PC-9 (cell line): ENCODE measurements at regions of chr11 and their contacts with region 1.

Region 1: GRCh38 chr11:69825037-69825834 is 6.0 kb upstream of the FGF3 start:
- DNase-seq: peak; percentile 83 to 89
- H3K4me3 ChIP-seq: peak overlapping the region; percentile 13; the same call in 1 of the 2 replicates
- H3K27ac ChIP-seq: no peak overlapping the region
- H3K4me1 ChIP-seq: peaks cover 16% of the 10 kb centered on the region
- H3K27me3 ChIP-seq: no peaks in the 10 kb centered on the region
- CTCF ChIP-seq: no peak

Region 2: DNA sequence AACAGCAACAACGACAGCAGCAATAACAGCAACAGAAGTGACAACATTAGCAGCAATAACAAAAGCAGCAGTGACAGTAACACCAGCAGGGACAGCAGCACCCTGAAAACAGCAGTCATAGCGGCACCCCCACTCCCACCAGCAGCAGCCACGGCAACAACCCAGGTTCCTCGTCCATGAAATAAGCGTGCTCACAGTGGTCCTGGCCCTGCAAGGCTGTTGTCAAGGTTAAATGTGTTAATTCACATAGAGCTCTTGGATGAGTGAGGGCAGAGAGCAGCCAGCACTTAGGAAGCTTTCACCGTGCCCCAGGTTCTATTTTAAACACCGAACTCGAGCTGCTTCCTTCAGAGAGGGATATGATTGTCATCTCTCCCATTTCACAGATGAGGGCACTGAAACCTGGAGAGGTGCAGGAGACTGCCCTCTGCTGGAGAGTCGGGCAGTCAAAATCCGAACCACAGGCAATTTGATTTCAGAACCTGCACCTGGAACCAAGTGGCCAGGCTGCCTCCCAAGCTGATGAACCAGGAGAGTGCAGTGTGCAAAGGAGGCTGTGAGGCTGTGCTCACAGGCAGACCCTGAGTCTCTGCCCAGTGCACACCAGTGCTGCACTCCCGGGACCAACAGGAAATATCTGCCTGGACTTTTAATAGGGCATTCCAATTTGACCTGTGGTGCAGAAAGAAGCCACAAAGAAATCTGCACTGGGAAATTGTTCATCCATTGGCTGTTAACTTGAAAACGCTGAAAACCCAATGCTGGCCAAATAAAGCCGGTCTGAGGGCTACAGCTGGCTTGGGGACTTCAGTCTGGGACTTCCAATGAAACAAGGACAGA is 16.8 kb after region 1 on chr11:
- CTCF ChIA-PET with region 1: no interaction called
- POLR2A ChIA-PET with region 1: interaction called, 19 read pairs
- intact Hi-C with region 1: loop called (anchors 2 kb)
- DNase-seq: no peak
- H3K4me3 ChIP-seq: no peak overlapping the region
- H3K27ac ChIP-seq: no peak overlapping the region
- H3K4me1 ChIP-seq: peaks cover 10% of the 10 kb centered on the region
- H3K27me3 ChIP-seq: no peaks in the 10 kb centered on the region
- CTCF ChIP-seq: peak; percentile 66

Region 3: GRCh38 chr11:70029115-70029830 is 204.0 kb after region 1 on chr11:
- CTCF ChIA-PET with region 1: no interaction called
- POLR2A ChIA-PET with region 1: no interaction called
- intact Hi-C with region 1: no loop called
- DNase-seq: no peak
- H3K4me3 ChIP-seq: no peak overlapping the region
- H3K27ac ChIP-seq: no peak overlapping the region
- H3K4me1 ChIP-seq: peaks cover 3% of the 10 kb centered on the region
- H3K27me3 ChIP-seq: no peaks in the 10 kb centered on the region
- CTCF ChIP-seq: no peak

Region 4: GRCh38 chr11:70415184-70415583 is 589.9 kb after region 1 on chr11:
- CTCF ChIA-PET with region 1: no interaction called
- POLR2A ChIA-PET with region 1: no interaction called
- intact Hi-C with region 1: no loop called
- DNase-seq: no peak
- H3K4me3 ChIP-seq: no peak overlapping the region
- H3K27ac ChIP-seq: no peak overlapping the region
- H3K4me1 ChIP-seq: no peaks in the 10 kb centered on the region
- H3K27me3 ChIP-seq: no peaks in the 10 kb centered on the region
- CTCF ChIP-seq: peak; percentile 50; the same call in 1 of the 2 replicates